WTC11 (cell line): ENCODE measurements at regions of chr11 and their contacts with region 1.

Region 1: DNA sequence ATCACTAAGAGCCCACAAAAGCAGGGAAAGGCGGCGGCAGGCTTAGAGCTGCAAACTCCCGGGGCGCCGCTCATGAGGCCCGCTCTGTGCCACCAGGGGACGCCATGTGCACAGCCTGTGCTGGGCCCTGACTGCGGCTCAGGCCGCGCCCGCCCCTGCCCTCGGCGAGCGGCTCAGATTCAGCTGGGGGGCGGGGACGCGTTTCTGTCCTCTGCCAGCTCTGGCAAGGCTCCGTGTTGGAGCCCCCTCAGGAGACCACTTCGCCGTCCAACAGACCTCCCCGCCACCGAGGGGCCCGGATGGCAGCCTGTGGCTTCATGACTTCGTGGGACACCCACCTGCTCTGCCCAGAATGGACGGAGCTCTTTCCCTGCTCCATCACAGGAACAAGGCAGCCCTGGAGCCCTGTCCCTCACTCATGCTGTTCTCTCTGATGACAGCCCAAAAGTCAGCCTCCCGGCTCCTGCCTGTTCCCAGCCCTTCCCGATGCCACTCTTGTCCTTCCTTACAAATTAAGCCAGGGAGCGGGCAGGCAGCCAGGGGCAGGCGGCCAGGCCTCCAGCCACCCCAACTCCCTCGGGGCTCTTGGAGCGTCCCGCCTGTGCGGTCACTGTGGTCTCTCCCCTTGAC is 69.1 kb downstream of the NAT10 start:
- DNase-seq: peak; percentile 92
- ATAC-seq: peak; percentile 95
- H3K4me3 Mint-ChIP-seq: peak overlapping the region; percentile 67
- H3K27ac Mint-ChIP-seq: no peak overlapping the region
- H3K4me1 Mint-ChIP-seq: peaks cover 10% of the 10 kb centered on the region; the same call in 1 of the 2 replicates
- H3K27me3 Mint-ChIP-seq: no peaks in the 10 kb centered on the region
- CTCF ChIP-seq: peak; percentile 67

Region 2: GRCh38 chr11:34192481-34193401 is 18.2 kb after region 1 on chr11:
- CTCF ChIA-PET with region 1: interaction called, 111 read pairs
- POLR2A ChIA-PET with region 1: interaction called, 7 read pairs
- DNase-seq: no peak
- ATAC-seq: no peak
- H3K4me3 Mint-ChIP-seq: no peak overlapping the region
- H3K27ac Mint-ChIP-seq: peak overlapping the region; percentile 90
- H3K4me1 Mint-ChIP-seq: peaks cover 40% of the 10 kb centered on the region
- H3K27me3 Mint-ChIP-seq: no peaks in the 10 kb centered on the region
- CTCF ChIP-seq: no peak

Region 3: GRCh38 chr11:34243726-34244464 is 69.4 kb after region 1 on chr11:
- CTCF ChIA-PET with region 1: interaction called, 20 read pairs
- POLR2A ChIA-PET with region 1: no interaction called
- DNase-seq: no peak
- ATAC-seq: peak; percentile 24; the same call in 1 of the 2 replicates
- H3K4me3 Mint-ChIP-seq: no peak overlapping the region
- H3K27ac Mint-ChIP-seq: no peak overlapping the region
- H3K4me1 Mint-ChIP-seq: peaks cover 30% of the 10 kb centered on the region
- H3K27me3 Mint-ChIP-seq: no peaks in the 10 kb centered on the region
- CTCF ChIP-seq: no peak

Region 4: DNA sequence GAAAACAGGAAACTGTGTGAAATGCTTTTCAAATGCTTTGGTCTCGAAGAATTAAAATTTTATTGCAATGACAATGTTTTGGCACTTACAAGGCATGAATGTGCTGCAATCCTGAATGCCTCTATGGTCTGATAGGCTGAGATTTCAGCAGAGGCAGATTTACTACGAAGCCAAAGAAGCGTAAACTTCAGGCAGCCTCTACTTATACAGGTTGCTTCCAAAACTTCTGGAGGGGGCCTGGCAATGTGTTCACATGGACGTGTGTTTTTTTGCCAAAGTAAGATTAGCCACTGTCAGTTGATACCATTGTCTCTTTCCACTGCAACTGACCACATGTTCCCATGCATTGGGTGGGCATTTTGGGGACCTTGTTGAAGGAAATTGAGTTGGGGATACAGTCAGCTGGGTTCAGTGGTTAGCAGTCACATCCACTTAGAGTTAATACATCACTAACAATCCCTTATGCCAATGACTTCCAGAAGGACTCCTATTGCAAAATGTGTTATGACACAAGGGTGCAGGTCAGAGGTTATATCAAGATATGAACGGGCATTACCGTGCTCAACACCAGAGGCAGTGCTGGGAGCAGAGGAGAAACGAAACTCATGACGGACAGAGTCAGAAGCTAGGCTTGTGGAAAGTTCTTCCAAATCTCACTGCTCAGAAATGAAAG is 134.5 kb after region 1 on chr11:
- CTCF ChIA-PET with region 1: interaction called, 21 read pairs
- POLR2A ChIA-PET with region 1: no interaction called
- DNase-seq: no peak
- ATAC-seq: no peak
- H3K4me3 Mint-ChIP-seq: no peak overlapping the region
- H3K27ac Mint-ChIP-seq: peak overlapping the region; percentile 48; the same call in 1 of the 2 replicates
- H3K4me1 Mint-ChIP-seq: peaks cover 45% of the 10 kb centered on the region
- H3K27me3 Mint-ChIP-seq: no peaks in the 10 kb centered on the region
- CTCF ChIP-seq: no peak

Region 5: DNA sequence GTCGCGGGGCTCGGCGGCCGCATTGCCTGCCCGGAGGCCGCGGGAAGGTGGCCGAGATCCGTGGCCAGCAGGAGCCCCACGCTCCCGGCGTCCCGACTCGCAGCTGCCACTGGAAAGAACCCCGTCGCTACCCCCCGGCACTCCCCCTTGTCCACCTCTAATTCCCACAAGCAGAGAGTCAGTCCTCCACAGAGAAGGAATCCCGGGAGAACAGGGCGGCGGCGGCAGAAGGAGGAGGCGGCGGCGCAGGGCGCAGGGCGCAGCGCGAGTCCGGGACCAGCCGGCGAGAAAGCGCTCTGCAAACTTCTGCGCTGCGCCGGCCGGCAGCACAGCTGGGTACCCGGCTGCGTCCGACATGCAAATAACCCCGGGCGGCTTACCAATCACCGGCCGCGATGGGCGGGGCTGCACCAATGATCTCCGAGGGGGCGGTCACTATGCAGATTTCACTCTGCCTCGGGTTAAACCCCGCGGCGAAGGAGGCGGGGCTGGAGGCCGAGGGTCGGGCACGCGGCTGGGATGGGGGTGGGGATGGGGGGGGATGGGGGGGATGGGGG is 183.3 kb after region 1 on chr11 and contains the start of gene ABTB2:
- CTCF ChIA-PET with region 1: interaction called, 236 read pairs
- POLR2A ChIA-PET with region 1: interaction called, 33 read pairs
- DNase-seq: peak; percentile 99
- ATAC-seq: peak; percentile 86
- H3K4me3 Mint-ChIP-seq: peak within 1 kb of the TSS; percentile 85
- H3K27ac Mint-ChIP-seq: peak within 1 kb of the TSS; percentile 98
- H3K4me1 Mint-ChIP-seq: peaks cover 23% of the 10 kb centered on the region
- H3K27me3 Mint-ChIP-seq: peaks cover 42% of the 10 kb centered on the region
- CTCF ChIP-seq: no peak
- total RNA-seq, gene ABTB2: 7.9 to 12.8 TPM (median 8.4 TPM) in 3 replicates

Region 6: GRCh38 chr11:34512840-34513681 is 338.5 kb after region 1 on chr11:
- CTCF ChIA-PET with region 1: interaction called, 12 read pairs
- POLR2A ChIA-PET with region 1: no interaction called
- DNase-seq: peak; percentile 78
- ATAC-seq: peak; percentile 94
- H3K4me3 Mint-ChIP-seq: no peak overlapping the region
- H3K27ac Mint-ChIP-seq: no peak overlapping the region
- H3K4me1 Mint-ChIP-seq: peaks cover 20% of the 10 kb centered on the region
- H3K27me3 Mint-ChIP-seq: no peaks in the 10 kb centered on the region
- CTCF ChIP-seq: peak; percentile 77